GM12878 (cell line): ENCODE measurements at regions of chr12 and their contacts with region 1.

Region 1: GRCh38 chr12:57462251-57462911 is 2.8 kb downstream of the GLI1 start:
- DNase-seq: peak; percentile 81
- ATAC-seq: peak; percentile 82
- H3K4me3 ChIP-seq: peak overlapping the region; percentile 68
- H3K27ac ChIP-seq: no peak overlapping the region
- H3K4me1 ChIP-seq: peaks cover 35% of the 10 kb centered on the region
- H3K27me3 ChIP-seq: 0 out of 4 replicates have a peak, but pooled peaks cover 0 to 4% of the 10 kb centered on the region in 2 experiments
- CTCF ChIP-seq: peak; percentile 94 to 99 (median 98)
- EP300 ChIP-seq: no peak
- POLR2A ChIP-seq: 0 out of 2 replicates have a peak, but pooled peaks have one; percentile 24
- RAD21 ChIP-seq: peak; percentile 75

Region 2: DNA sequence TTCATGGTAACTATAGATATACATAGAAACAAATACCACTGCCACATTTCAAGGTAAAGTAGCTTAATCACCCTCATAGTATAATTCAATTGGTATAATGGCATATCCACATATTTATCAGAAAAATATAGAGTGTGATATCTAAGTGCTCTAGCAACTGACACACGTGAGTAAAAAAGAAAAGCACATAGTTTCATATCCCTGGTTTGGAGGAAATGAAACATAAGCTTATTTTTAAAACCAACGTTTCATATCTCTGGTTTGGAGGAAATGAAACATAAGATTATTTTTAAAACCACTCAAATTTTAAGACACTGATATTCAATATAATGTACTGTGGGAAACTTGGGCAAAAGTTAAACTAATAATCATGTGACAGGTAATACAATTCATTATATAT is 1994.5 kb before region 1 on chr12:
- CTCF ChIA-PET with region 1: no interaction called
- POLR2A ChIA-PET with region 1: no interaction called
- RAD21 ChIA-PET with region 1: no interaction called
- SMC1A ChIA-PET with region 1: no interaction called
- in situ Hi-C with region 1: no loop called
- intact Hi-C with region 1: no loop called
- DNase-seq: no peak
- ATAC-seq: peak; percentile 36; the same call in 1 of the 3 replicates
- H3K4me3 ChIP-seq: no peak overlapping the region
- H3K27ac ChIP-seq: no peak overlapping the region
- H3K4me1 ChIP-seq: peaks cover 7% of the 10 kb centered on the region; the same call in 1 of the 2 replicates
- H3K27me3 ChIP-seq: no peaks in the 10 kb centered on the region
- CTCF ChIP-seq: no peak
- EP300 ChIP-seq: no peak
- POLR2A ChIP-seq: no peak
- RAD21 ChIP-seq: no peak

Region 3: DNA sequence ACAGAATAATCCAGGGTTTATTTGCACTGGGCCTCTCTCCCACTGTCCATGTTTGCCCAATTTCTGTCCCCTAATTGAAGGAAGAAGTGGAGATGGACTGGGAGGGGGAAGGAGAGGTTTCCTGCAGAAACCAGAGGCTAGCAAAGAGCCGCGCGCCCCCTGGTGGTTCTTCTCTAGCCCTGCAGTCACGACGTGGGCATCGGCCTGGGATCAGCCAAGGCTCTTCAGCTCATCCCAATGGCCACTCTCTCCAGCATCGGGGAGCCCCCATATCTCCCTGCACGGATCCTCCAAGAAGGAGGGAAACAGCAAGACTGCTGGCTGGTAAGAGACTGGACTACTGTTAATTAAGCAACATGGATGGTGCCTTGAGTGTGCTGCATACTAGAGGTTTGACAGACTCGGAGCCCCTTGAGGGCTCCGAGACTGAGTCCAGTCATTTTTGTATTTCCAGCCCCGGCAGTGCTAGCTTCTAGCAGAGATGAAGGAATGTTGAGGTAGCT is 474.8 kb before region 1 on chr12:
- CTCF ChIA-PET with region 1: no interaction called
- POLR2A ChIA-PET with region 1: no interaction called
- RAD21 ChIA-PET with region 1: no interaction called
- SMC1A ChIA-PET with region 1: no interaction called
- in situ Hi-C with region 1: no loop called
- intact Hi-C with region 1: no loop called
- DNase-seq: no peak
- ATAC-seq: peak; percentile 90
- H3K4me3 ChIP-seq: no peak overlapping the region
- H3K27ac ChIP-seq: no peak overlapping the region
- H3K4me1 ChIP-seq: peaks cover 18% of the 10 kb centered on the region
- H3K27me3 ChIP-seq: no peaks in the 10 kb centered on the region
- CTCF ChIP-seq: peak; percentile 93 to 97 (median 96)
- EP300 ChIP-seq: no peak
- POLR2A ChIP-seq: no peak
- RAD21 ChIP-seq: peak; percentile 88

Region 4: DNA sequence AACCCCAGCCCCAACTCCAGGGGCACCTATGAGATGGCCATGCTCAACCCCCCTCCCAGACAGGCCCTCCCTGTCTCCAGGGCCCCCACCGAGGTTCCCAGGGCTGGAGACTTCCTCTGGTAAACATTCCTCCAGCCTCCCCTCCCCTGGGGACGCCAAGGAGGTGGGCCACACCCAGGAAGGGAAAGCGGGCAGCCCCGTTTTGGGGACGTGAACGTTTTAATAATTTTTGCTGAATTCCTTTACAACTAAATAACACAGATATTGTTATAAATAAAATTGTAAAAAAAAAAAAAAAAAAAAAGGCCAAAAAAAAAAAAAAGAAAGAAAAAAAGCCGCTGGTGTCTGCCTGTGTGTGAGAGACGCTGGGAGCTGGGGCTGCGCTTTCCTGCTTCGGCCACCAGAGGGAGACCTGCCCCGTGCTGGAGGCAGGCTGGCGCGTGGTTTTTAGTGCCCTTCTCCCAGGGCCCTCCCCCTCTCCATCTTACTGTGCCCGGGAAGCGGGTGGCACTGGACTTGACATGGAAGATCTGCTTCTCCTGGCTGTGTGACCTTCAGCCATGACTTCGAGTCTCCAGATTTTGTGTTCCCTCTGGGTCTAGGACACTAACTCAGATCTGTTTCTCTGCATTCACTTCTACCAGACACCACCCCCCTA is 249.2 kb before region 1 on chr12:
- CTCF ChIA-PET with region 1: interaction called, 17 read pairs
- POLR2A ChIA-PET with region 1: interaction called, 4 read pairs
- RAD21 ChIA-PET with region 1: no interaction called
- SMC1A ChIA-PET with region 1: interaction called, 7 read pairs
- in situ Hi-C with region 1: no loop called
- intact Hi-C with region 1: no loop called
- DNase-seq: peak; percentile 27
- ATAC-seq: peak; percentile 79
- H3K4me3 ChIP-seq: no peak overlapping the region
- H3K27ac ChIP-seq: no peak overlapping the region
- H3K4me1 ChIP-seq: peaks cover 13% of the 10 kb centered on the region
- H3K27me3 ChIP-seq: peaks cover 16 to 20% of the 10 kb centered on the region in 2 experiments
- CTCF ChIP-seq: peak; percentile 94 to 97 (median 97)
- EP300 ChIP-seq: no peak
- POLR2A ChIP-seq: no peak
- RAD21 ChIP-seq: peak; percentile 84

Region 5: DNA sequence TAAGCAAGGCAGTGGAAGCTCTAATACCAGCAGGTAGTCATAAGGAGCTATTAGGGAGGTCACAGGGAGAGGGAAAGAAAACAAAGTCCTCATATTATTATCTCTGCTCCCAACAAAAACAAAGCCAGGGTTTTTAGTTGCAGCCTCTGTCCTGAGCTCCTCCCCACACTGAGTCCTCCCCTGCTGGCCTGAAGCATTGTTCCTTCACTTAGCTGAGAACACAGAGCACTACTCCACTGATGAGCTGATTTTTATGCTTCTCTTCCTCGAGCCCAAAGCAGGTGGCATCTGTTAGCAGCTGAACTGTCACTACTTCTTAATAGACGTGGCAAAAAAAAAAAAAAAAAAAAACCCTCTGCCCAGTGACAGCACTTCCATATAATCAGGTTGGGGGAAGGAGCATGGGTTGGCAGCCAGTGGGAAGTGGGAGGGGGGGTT is 200.9 kb before region 1 on chr12:
- CTCF ChIA-PET with region 1: interaction called, 33 read pairs
- POLR2A ChIA-PET with region 1: interaction called, 4 read pairs
- RAD21 ChIA-PET with region 1: interaction called, 4 read pairs
- SMC1A ChIA-PET with region 1: interaction called, 11 read pairs
- in situ Hi-C with region 1: loop called (anchors 5 kb)
- intact Hi-C with region 1: no loop called
- DNase-seq: no peak
- ATAC-seq: no peak
- H3K4me3 ChIP-seq: no peak overlapping the region
- H3K27ac ChIP-seq: no peak overlapping the region
- H3K4me1 ChIP-seq: no peaks in the 10 kb centered on the region
- H3K27me3 ChIP-seq: no peaks in the 10 kb centered on the region
- CTCF ChIP-seq: no peak
- EP300 ChIP-seq: no peak
- POLR2A ChIP-seq: no peak
- RAD21 ChIP-seq: no peak

Region 6: DNA sequence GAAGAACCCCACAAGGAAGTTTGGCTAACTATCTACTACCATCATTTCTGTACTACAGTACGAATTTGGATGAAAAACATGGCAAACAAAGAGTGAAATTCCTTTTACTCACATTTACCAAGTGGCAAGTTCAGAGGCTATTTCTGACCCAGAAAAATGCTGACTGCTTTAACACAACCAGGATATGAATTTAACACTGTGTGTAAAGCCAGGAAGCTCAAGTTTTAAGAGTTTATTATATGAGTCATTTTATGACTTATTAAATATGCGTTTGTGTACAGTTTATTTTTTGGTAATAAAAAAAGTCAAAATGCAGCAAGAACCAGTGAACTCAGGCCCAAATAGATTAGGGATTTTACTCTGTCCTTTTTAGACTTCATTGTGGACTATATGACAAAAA is 153.0 kb before region 1 on chr12:
- CTCF ChIA-PET with region 1: interaction called, 540 read pairs
- POLR2A ChIA-PET with region 1: interaction called, 3 read pairs
- RAD21 ChIA-PET with region 1: interaction called, 22 read pairs
- SMC1A ChIA-PET with region 1: interaction called, 20 read pairs
- in situ Hi-C with region 1: loop called (anchors 10 kb)
- intact Hi-C with region 1: no loop called
- DNase-seq: no peak
- ATAC-seq: no peak
- H3K4me3 ChIP-seq: no peak overlapping the region
- H3K27ac ChIP-seq: no peak overlapping the region
- H3K4me1 ChIP-seq: no peaks in the 10 kb centered on the region
- H3K27me3 ChIP-seq: no peaks in the 10 kb centered on the region
- CTCF ChIP-seq: no peak
- EP300 ChIP-seq: no peak
- POLR2A ChIP-seq: no peak
- RAD21 ChIP-seq: no peak

Region 7: GRCh38 chr12:57404966-57405640 is 57.3 kb before region 1 on chr12:
- CTCF ChIA-PET with region 1: no interaction called
- POLR2A ChIA-PET with region 1: no interaction called
- RAD21 ChIA-PET with region 1: no interaction called
- SMC1A ChIA-PET with region 1: no interaction called
- in situ Hi-C with region 1: no loop called
- intact Hi-C with region 1: no loop called
- DNase-seq: no peak
- ATAC-seq: 0 out of 3 replicates have a peak, but pooled peaks have one; percentile 19
- H3K4me3 ChIP-seq: no peak overlapping the region
- H3K27ac ChIP-seq: no peak overlapping the region
- H3K4me1 ChIP-seq: no peaks in the 10 kb centered on the region
- H3K27me3 ChIP-seq: no peaks in the 10 kb centered on the region
- CTCF ChIP-seq: no peak
- EP300 ChIP-seq: no peak
- POLR2A ChIP-seq: no peak
- RAD21 ChIP-seq: no peak

Region 8: GRCh38 chr12:57476162-57476992 is 14.0 kb after region 1 on chr12:
- CTCF ChIA-PET with region 1: interaction called, 114 read pairs
- POLR2A ChIA-PET with region 1: interaction called, 16 read pairs
- RAD21 ChIA-PET with region 1: interaction called, 15 read pairs
- SMC1A ChIA-PET with region 1: interaction called, 18 read pairs
- in situ Hi-C with region 1: no loop called
- intact Hi-C with region 1: no loop called
- DNase-seq: no peak
- ATAC-seq: peak; percentile 62
- H3K4me3 ChIP-seq: peak overlapping the region; percentile 92
- H3K27ac ChIP-seq: peak overlapping the region; percentile 85
- H3K4me1 ChIP-seq: peaks cover 34% of the 10 kb centered on the region
- H3K27me3 ChIP-seq: no peaks in the 10 kb centered on the region
- CTCF ChIP-seq: peak; percentile 48 to 81 (median 72)
- EP300 ChIP-seq: no peak
- POLR2A ChIP-seq: peak; percentile 73
- RAD21 ChIP-seq: peak; percentile 43

Region 9: DNA sequence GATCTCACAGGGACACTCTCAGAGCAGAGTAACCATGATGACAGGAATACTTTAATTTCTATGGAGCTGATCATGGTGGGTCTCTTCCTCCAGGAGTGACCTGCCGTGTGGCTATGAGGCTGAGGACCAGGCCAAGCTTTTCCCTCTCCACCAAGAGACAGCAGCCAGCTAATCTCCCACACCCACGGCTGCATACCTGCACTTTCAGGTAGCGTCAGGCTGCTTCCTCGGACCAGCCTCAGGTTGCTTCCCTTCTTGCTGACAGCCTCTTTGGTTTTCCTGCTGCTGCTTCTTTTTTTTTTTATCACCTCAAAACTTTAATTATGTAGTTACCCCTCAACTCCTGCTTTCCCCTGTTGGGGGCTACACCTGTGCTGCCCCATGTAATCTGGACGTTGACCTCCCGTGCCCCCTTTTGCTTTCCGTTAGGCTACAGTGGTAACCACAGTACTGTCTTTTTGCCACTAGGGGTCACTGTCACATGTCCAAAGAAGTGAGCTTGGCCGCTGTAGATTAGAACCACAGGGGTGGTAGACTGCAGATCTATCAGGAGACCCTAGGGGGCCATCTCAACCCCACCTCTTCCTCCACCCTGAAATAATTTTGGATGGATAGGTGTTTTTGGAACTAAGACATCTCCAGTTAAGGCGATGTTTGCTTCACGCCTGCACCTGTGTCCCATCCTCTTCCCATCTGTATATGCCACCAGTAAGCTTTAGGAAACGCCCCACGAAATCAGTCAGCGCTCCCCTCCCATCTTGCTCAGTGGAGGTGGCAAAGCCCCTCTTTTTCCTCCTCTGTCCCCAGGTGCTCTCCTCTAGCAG is 120.8 kb after region 1 on chr12:
- CTCF ChIA-PET with region 1: interaction called, 25 read pairs
- POLR2A ChIA-PET with region 1: interaction called, 3 read pairs
- RAD21 ChIA-PET with region 1: interaction called, 4 read pairs
- SMC1A ChIA-PET with region 1: interaction called, 6 read pairs
- in situ Hi-C with region 1: no loop called
- intact Hi-C with region 1: no loop called
- DNase-seq: peak; percentile 31
- ATAC-seq: peak; percentile 100
- H3K4me3 ChIP-seq: no peak overlapping the region
- H3K27ac ChIP-seq: no peak overlapping the region
- H3K4me1 ChIP-seq: no peaks in the 10 kb centered on the region
- H3K27me3 ChIP-seq: no peaks in the 10 kb centered on the region; a peak in 1 of 4 replicates
- CTCF ChIP-seq: peak; percentile 91 to 98 (median 97)
- EP300 ChIP-seq: no peak
- POLR2A ChIP-seq: no peak
- RAD21 ChIP-seq: peak; percentile 89

Region 10: GRCh38 chr12:57621497-57622292 is 159.3 kb after region 1 on chr12:
- CTCF ChIA-PET with region 1: interaction called, 15 read pairs
- POLR2A ChIA-PET with region 1: no interaction called
- RAD21 ChIA-PET with region 1: interaction called, 4 read pairs
- SMC1A ChIA-PET with region 1: interaction called, 5 read pairs
- in situ Hi-C with region 1: no loop called
- intact Hi-C with region 1: loop called (anchors 5 kb)
- DNase-seq: no peak
- ATAC-seq: peak; percentile 92
- H3K4me3 ChIP-seq: 0 out of 2 replicates have a peak overlapping the region, but pooled peaks have one; percentile 16
- H3K27ac ChIP-seq: no peak overlapping the region
- H3K4me1 ChIP-seq: peaks cover 6% of the 10 kb centered on the region
- H3K27me3 ChIP-seq: peaks cover 28 to 31% of the 10 kb centered on the region in 2 experiments; a peak in 3 of 4 replicates
- CTCF ChIP-seq: peak; percentile 80 to 90 (median 80)
- EP300 ChIP-seq: no peak
- POLR2A ChIP-seq: no peak
- RAD21 ChIP-seq: peak; percentile 58